ENCODE measurements at regions of chr13 and their contacts with region 1.

Region 1: DNA sequence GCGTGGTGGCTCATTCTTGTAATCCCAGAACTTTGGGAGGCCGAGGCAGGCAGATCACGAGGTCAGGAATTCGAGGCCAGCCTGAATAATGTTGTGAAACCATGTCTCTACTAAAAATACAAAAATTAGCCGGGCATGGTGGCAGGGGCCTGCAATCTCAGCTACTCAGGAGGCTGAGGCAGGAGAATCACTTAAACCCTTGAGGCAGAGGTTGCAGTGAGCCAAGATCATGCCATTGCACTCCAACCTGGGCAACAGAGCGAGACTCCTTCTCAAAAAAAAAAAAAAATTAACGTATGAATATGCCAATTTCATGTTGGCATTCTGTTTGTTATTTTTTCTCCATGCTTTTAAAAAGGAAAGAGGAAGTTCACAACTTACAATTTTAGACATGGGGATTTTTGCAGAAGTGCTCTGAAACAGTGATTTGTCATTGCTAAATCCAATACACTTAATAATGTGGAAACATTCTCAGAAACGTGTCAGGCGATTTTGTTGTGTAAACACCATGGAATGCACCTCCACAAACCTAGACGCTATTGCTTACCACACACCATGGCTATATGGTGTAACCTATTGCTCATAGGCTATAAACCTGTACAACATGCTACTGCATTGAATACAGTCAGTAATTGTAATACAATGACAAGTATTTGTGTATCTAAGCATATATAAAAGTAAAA is 115.9 kb upstream of the PCDH20 start:
- DNase-seq: no peak
- H3K4me3 ChIP-seq: no peak overlapping the region
- H3K27ac ChIP-seq: no peak overlapping the region
- H3K4me1 ChIP-seq: no peaks in the 10 kb centered on the region
- H3K27me3 ChIP-seq: no peaks in the 10 kb centered on the region
- CTCF ChIP-seq: no peak
- EP300 ChIP-seq: no peak
- POLR2A ChIP-seq: no peak

Region 2: GRCh38 chr13:61495648-61496047 is 35.9 kb before region 1 on chr13:
- intact Hi-C with region 1: loop called in 1 of 4 experiments (anchors 1 kb)
- DNase-seq: no peak
- H3K4me3 ChIP-seq: no peak overlapping the region
- H3K27ac ChIP-seq: no peak overlapping the region
- H3K4me1 ChIP-seq: no peaks in the 10 kb centered on the region
- H3K27me3 ChIP-seq: no peaks in the 10 kb centered on the region
- CTCF ChIP-seq: no peak
- EP300 ChIP-seq: no peak
- POLR2A ChIP-seq: no peak

Region 3: GRCh38 chr13:61695147-61695546 is 163.6 kb after region 1 on chr13:
- intact Hi-C with region 1: no loop called
- DNase-seq: no peak
- H3K4me3 ChIP-seq: no peak overlapping the region
- H3K27ac ChIP-seq: no peak overlapping the region
- H3K4me1 ChIP-seq: no peaks in the 10 kb centered on the region
- H3K27me3 ChIP-seq: no peaks in the 10 kb centered on the region
- CTCF ChIP-seq: no peak
- EP300 ChIP-seq: no peak
- POLR2A ChIP-seq: no peak

Measured in ovary (tissue), 10 donors.